ENCODE measurements at regions of chr17 and their contacts with region 1.

Region 1: DNA sequence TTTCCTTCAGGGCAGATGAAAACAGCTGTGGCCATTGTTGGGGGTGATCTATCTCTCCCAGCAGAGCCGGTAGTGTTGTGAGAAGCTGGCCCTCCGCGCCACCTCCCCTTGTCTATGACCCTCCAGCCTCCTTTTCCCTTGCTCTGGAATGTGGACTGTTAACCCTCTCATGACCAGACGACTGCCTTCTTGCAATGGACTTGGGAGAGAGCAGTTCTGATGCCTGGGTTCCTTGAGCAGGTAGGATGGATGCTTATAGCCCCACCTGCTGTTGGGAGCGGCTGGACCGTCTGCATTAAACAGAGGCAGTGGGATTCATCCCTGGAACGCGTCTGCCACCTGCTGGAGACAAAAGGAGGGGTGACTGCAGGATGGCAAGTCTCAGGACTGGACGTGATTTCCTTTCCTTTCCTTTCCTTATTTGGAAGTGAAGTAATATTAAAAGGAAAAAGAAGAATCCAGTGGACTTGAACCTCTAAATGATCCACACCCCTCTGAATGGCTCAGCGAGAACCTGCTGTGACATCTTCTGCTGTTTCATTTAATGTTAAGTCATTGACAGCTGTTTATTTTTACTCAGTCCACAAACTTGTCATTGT is 1.8 kb upstream of the SOST start:
- DNase-seq: peak; percentile 97
- ATAC-seq: peak; percentile 97
- H3K4me3 Mint-ChIP-seq: no peak overlapping the region
- H3K27ac Mint-ChIP-seq: no peak overlapping the region
- H3K4me1 Mint-ChIP-seq: no peaks in the 10 kb centered on the region
- H3K27me3 Mint-ChIP-seq: peaks cover 15% of the 10 kb centered on the region
- CTCF ChIP-seq: peak; percentile 97

Region 2: DNA sequence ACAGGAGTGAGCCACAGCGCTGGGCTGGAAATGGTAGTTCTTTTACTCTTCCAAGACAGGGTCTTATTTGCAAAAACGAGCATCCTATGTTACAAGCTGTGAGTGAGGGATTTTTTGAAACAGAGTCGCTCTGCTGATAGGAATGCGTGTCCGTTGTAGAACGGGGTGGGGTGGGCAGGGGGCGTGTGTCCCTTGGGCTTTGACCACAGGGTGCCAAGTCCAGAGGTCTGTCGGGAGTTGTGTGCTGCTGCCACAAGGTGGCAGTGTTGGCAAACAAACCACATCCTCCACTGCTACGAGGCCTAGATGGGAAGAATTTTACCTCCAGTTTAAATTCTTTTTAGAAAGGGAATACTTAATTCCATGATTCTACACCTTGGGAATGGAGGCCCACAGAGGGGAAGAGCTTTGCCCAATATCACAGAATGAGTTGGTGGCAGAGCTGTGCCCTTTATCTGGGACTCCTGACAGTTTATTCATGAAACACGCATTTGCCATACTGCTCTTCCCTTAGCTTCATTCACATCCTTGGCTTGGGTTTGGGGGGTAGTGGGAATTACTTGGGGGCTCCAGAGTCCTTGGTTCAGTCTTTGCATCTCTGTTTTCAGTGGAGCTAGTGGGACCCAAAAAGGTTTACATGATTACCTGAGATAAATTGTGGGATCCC is 183.7 kb before region 1 on chr17:
- CTCF ChIA-PET with region 1: interaction called, 27 read pairs
- POLR2A ChIA-PET with region 1: no interaction called
- intact Hi-C with region 1: loop called (anchors 10 kb)
- DNase-seq: peak; percentile 73
- ATAC-seq: peak; percentile 77
- H3K4me3 Mint-ChIP-seq: no peak overlapping the region
- H3K27ac Mint-ChIP-seq: no peak overlapping the region
- H3K4me1 Mint-ChIP-seq: peaks cover 12% of the 10 kb centered on the region
- H3K27me3 Mint-ChIP-seq: peaks cover 2% of the 10 kb centered on the region
- CTCF ChIP-seq: peak; percentile 92

Region 3: GRCh38 chr17:43673516-43674323 is 86.6 kb before region 1 on chr17:
- CTCF ChIA-PET with region 1: interaction called, 10 read pairs
- POLR2A ChIA-PET with region 1: no interaction called
- intact Hi-C with region 1: no loop called
- DNase-seq: peak; percentile 88
- ATAC-seq: peak; percentile 75
- H3K4me3 Mint-ChIP-seq: no peak overlapping the region
- H3K27ac Mint-ChIP-seq: no peak overlapping the region
- H3K4me1 Mint-ChIP-seq: peaks cover 11% of the 10 kb centered on the region
- H3K27me3 Mint-ChIP-seq: peaks cover 3% of the 10 kb centered on the region
- CTCF ChIP-seq: peak; percentile 97

Region 4: DNA sequence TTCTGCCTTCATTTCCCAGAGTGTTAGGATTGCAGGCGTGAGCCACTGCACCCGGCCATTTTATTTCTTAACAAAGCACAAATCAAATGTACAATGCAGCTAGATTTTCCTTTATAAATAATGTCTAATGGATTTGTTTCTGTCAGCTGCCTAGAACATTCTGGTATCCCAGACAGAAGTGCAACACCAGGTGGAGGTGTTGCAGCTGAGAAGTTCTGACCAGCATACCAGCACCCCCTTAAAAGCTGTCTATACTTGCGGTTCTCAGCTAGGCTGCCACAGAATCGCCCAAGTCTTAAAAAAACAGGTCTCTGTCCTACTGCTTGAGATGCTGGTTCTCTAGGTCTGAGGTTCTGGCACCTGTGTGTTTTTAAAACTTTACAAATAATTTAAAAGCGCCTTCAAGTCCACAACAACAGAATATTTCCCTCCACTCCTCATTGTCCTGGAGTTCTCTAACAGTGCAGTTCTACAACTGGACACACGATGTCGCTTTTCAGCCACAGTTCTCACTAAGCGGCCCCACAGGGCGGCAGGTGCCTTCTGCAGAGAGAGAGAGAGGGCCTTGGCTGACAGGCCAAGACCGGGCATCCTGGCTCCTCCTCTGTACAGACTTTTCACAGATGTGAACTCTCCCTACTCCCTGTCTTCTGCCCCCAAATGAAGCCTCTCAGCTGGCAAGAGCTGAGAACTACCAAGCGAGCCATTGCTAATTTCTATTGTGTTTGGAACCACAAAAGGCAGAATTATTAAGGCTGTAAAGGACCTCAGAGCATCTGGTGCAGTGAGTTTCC is 66.1 kb before region 1 on chr17:
- CTCF ChIA-PET with region 1: interaction called, 661 read pairs
- POLR2A ChIA-PET with region 1: interaction called, 6 read pairs
- intact Hi-C with region 1: loop called (anchors 1 kb)
- DNase-seq: peak; percentile 87
- ATAC-seq: peak; percentile 100
- H3K4me3 Mint-ChIP-seq: no peak overlapping the region
- H3K27ac Mint-ChIP-seq: no peak overlapping the region
- H3K4me1 Mint-ChIP-seq: no peaks in the 10 kb centered on the region
- H3K27me3 Mint-ChIP-seq: peaks cover 7% of the 10 kb centered on the region
- CTCF ChIP-seq: peak; percentile 90

Region 5: DNA sequence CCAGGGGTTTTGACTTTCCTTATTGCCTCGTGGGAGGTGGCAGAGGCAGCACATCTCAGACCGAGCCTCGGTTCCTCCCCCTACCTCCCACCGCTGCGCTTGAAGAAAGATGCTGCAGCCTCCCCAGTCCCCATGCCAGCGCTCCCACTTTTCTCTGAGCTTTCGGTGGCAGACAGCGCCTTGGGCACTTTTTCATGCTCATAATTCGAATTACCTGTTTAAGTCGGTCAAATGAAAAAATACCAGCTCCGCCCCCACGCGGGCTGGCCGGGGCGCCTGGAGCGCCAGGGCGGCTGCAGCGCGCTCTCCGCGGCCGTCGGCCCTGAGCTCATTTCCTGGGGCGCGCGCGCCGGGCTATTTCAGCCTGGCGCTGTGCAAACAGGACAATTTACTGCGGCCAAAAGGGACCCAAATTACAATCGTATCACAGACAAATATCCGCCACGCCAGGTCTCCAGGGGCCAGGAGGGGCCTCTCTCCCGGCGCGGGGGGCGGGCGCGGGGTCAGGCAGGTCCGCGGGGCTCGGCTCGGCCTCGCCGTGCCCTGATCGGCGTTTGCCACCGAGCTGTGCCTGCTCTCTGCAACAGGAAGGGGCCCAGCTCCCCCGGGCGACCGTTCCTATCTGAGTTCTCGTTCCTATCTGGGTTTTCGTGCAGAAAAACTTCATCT is 46.7 kb before region 1 on chr17:
- CTCF ChIA-PET with region 1: interaction called, 22 read pairs
- POLR2A ChIA-PET with region 1: no interaction called
- intact Hi-C with region 1: no loop called
- DNase-seq: peak; percentile 35
- ATAC-seq: peak; percentile 75
- H3K4me3 Mint-ChIP-seq: peak overlapping the region; percentile 51
- H3K27ac Mint-ChIP-seq: no peak overlapping the region
- H3K4me1 Mint-ChIP-seq: peaks cover 12% of the 10 kb centered on the region
- H3K27me3 Mint-ChIP-seq: peaks cover 44% of the 10 kb centered on the region
- CTCF ChIP-seq: no peak

Region 6: DNA sequence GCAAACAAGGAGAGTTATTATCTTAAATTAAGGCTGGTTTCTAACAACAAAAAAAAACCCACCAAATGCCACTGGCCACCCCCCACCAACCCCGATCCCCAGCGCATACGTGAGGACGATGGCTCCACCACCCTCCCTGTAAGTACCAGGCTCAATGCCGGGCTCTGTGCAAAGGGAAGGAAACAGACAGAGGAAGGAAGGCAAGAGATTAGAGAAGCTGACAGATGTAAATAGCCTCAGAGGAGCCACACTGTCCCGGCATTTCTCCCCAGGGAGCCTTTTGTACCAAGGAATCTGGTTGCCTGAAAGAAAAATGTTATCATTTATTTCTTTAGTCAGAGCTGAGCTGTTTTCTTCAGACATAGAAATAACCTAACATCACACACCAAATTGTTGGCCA is 14.8 kb before region 1 on chr17:
- CTCF ChIA-PET with region 1: interaction called, 18 read pairs
- POLR2A ChIA-PET with region 1: no interaction called
- intact Hi-C with region 1: no loop called
- DNase-seq: no peak
- ATAC-seq: no peak
- H3K4me3 Mint-ChIP-seq: no peak overlapping the region
- H3K27ac Mint-ChIP-seq: no peak overlapping the region
- H3K4me1 Mint-ChIP-seq: no peaks in the 10 kb centered on the region
- H3K27me3 Mint-ChIP-seq: peaks cover 25% of the 10 kb centered on the region
- CTCF ChIP-seq: no peak

Region 7: GRCh38 chr17:43772877-43773648 is 12.7 kb after region 1 on chr17:
- CTCF ChIA-PET with region 1: interaction called, 54 read pairs
- POLR2A ChIA-PET with region 1: no interaction called
- intact Hi-C with region 1: no loop called
- DNase-seq: no peak
- ATAC-seq: no peak
- H3K4me3 Mint-ChIP-seq: no peak overlapping the region
- H3K27ac Mint-ChIP-seq: no peak overlapping the region
- H3K4me1 Mint-ChIP-seq: peaks cover 3% of the 10 kb centered on the region
- H3K27me3 Mint-ChIP-seq: no peaks in the 10 kb centered on the region
- CTCF ChIP-seq: no peak